ENCODE measurements at regions of chr14 and their contacts with region 1.

Region 1: GRCh38 chr14:95534299-95535225 is at the start of gene GLRX5:
- DNase-seq: peak; percentile 98 to 99
- ATAC-seq: peak; percentile 98
- H3K4me3 ChIP-seq: peak within 1 kb of the TSS; percentile 62 to 90
- H3K27ac ChIP-seq: peak within 1 kb of the TSS in 1 of 2 donors; percentile 61
- H3K4me1 ChIP-seq: peaks cover 3 to 7% of the 10 kb centered on the region in 2 donors
- H3K27me3 ChIP-seq: no peaks in the 10 kb centered on the region
- total RNA-seq, gene GLRX5: 20.1 to 22.4 TPM

Region 2: GRCh38 chr14:94342334-94342934 is 1192.1 kb before region 1 on chr14:
- intact Hi-C with region 1: loop called in 1 of 2 experiments (anchors 10 kb)
- DNase-seq: peak; percentile 90 to 94
- ATAC-seq: peak; percentile 81
- H3K4me3 ChIP-seq: no peak overlapping the region
- H3K27ac ChIP-seq: no peak overlapping the region
- H3K4me1 ChIP-seq: no peaks in the 10 kb centered on the region
- H3K27me3 ChIP-seq: no peaks in the 10 kb centered on the region

Region 3: GRCh38 chr14:95319312-95320021 is 215.1 kb before region 1 on chr14 and contains the start of gene CLMN:
- intact Hi-C with region 1: loop called in 1 of 2 experiments (anchors 10 kb)
- DNase-seq: peak in 1 of 2 donors; percentile 59
- ATAC-seq: peak; percentile 26
- H3K4me3 ChIP-seq: peak within 1 kb of the TSS; percentile 56 to 87
- H3K27ac ChIP-seq: no peak within 1 kb of the TSS
- H3K4me1 ChIP-seq: no peaks in the 10 kb centered on the region
- H3K27me3 ChIP-seq: no peaks in the 10 kb centered on the region
- total RNA-seq, gene CLMN: 15.8 to 18.3 TPM

Region 4: DNA sequence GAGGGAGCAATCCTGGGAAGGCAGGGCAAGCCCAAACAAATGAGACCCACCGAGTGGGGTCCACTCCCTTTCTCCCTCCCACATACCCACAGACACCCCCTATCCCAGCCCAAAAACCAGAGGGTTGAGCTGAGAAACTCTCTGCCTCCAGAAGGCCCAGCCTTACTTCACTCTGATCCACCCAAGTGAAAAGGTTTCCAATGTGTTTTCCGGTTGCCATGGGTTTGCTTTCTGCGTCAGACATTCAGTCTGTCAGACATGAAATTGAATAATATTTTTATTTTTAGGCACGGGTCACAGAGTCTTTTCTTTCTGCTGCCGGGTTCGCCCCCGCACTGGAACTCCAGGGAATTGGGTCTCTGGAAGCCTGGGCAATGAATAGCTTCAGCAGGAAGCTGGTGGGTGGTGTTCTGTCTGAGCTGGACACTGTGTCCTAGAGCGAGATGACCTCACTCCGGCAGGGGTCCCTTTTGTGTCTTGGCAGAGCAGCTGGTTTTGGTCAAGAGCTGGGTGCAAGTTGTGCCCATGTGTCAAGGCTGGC is 145.0 kb before region 1 on chr14:
- intact Hi-C with region 1: no loop called
- DNase-seq: peak; percentile 76 to 93
- ATAC-seq: peak; percentile 79
- H3K4me3 ChIP-seq: no peak overlapping the region
- H3K27ac ChIP-seq: peak overlapping the region in 1 of 2 donors; percentile 70
- H3K4me1 ChIP-seq: no peaks in the 10 kb centered on the region
- H3K27me3 ChIP-seq: no peaks in the 10 kb centered on the region

Region 5: DNA sequence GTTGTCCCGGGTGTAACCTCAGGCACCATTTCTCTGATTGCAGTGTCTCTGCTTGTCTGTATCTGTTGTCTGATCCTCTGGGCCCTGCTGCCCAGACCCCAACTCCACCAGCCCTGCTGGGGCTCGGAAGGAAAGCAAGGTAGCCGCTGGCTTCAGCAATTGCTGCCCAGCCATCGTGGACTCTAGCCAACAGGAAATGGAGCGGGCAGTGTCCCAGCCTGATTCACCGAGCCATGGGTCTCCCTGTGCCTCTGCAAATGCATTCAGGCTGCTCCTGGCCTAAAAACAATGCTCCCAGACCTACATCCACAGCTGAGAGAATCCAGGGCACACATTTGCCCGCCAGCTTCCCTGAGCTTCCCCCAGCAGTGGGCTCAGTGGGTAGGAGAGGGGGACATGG is 351.3 kb after region 1 on chr14:
- intact Hi-C with region 1: loop called in 1 of 2 experiments (anchors 10 kb)
- DNase-seq: peak in 1 of 2 donors; percentile 69
- ATAC-seq: no peak
- H3K4me3 ChIP-seq: no peak overlapping the region
- H3K27ac ChIP-seq: peak overlapping the region in 1 of 2 donors; percentile 11
- H3K4me1 ChIP-seq: peaks cover 0 to 4% of the 10 kb centered on the region in 2 donors
- H3K27me3 ChIP-seq: no peaks in the 10 kb centered on the region

Measured in aorta (tissue), 5 donors.